ENCODE measurements at regions of chr17 and their contacts with region 1.

Region 1: DNA sequence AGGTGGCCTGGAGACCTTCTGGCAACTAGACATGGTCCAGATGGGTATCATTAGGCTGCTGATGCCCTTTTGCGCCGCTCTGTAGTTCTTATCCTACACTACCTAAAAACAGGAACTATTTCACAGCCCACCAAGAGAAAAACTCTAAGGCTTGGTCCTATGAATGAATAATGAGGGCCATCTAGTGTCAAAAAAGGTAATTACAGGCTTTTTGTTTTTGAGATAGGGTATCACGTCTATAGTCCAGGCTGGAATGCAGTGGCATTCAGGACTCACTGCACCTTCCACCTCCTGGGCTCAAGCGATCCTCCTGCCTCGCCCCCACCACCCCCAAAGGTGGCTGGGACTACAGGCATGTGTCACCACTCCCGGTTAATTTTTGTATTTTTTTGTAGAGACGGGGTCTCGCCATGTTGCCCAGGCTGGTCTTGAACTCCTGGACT is 20.9 kb downstream of the COIL start:
- DNase-seq: no peak
- ATAC-seq: peak; percentile 50 to 90 (median 86)
- H3K4me3 ChIP-seq: no peak overlapping the region
- H3K27ac ChIP-seq: no peak overlapping the region
- H3K4me1 ChIP-seq: no peaks in the 10 kb centered on the region
- H3K27me3 ChIP-seq: no peaks in the 10 kb centered on the region
- CTCF ChIP-seq: peak; percentile 44 to 51 (median 48)

Region 2: GRCh38 chr17:56810343-56810742 is 129.6 kb before region 1 on chr17:
- intact Hi-C with region 1: loop called in 2 of 3 experiments (anchors 5 to 10 kb)
- DNase-seq: no peak
- ATAC-seq: no peak
- H3K4me3 ChIP-seq: no peak overlapping the region
- H3K27ac ChIP-seq: no peak overlapping the region
- H3K4me1 ChIP-seq: no peaks in the 10 kb centered on the region
- H3K27me3 ChIP-seq: no peaks in the 10 kb centered on the region
- CTCF ChIP-seq: no peak

Region 3: DNA sequence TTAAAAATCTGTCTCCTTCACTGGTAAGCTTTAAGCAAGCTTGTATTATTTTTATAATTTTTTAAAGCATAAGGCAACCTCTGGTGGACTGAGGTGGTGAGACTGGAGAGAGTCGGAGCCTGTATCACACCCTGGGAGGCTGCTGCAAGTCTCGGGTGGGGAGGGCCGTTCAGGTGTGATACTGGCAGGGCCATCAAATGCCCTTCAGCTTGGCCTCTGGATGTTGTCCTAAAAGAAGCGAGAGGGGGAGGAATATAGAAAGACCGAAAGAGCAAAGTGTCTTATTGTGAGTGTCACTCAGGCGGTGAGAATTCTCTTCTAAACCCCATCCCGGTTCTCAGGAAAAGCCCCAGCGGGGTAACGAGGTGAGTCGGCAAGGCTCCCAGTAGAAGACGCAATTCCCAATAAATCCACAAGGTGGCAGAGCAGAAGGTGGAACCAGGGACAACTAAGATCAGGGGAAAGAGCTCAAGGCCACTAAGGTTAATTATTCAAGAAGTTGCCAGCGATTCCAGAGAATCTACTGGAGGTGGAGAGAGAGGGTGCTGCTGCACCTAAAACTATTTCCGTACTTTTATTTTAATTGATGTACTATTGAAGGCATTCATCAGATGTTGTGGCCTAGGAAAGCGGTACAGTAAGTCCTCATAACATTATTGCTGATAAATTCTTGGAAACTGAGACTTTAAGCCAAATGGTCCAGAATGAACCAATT is 120.3 kb before region 1 on chr17:
- intact Hi-C with region 1: loop called in 2 of 3 experiments (anchors 5 to 10 kb)
- DNase-seq: peak in 4 of 6 donors; percentile 62 to 91 (median 80)
- ATAC-seq: peak; percentile 88 to 95 (median 94)
- H3K4me3 ChIP-seq: peak overlapping the region in 1 of 4 donors; percentile 3
- H3K27ac ChIP-seq: peak overlapping the region in 2 of 4 donors; percentile 37 to 60
- H3K4me1 ChIP-seq: peaks cover 3 to 30% (median 21%) of the 10 kb centered on the region in 3 donors
- H3K27me3 ChIP-seq: no peaks in the 10 kb centered on the region
- CTCF ChIP-seq: peak; percentile 84 to 91 (median 90)

Region 4: DNA sequence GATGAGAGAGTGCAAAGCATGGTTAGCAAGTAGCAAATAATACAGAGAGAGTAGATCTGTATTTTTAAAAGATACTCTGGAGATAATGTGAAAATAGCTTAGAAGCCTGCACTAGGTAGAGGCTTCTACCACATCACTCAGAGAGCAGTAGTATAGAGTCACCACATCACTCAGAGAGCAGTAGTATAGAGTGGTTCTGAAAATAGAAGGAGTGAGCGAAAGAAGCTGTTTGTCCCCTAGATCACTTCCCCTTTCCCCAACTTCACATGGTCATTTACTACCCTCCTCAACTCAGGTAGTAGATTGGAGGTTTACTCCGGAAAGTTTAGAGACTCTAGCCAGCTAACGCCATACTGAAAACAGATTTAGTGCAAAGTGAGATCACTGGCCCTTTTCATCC is 88.9 kb before region 1 on chr17:
- intact Hi-C with region 1: no loop called
- DNase-seq: no peak
- ATAC-seq: no peak
- H3K4me3 ChIP-seq: no peak overlapping the region
- H3K27ac ChIP-seq: no peak overlapping the region
- H3K4me1 ChIP-seq: no peaks in the 10 kb centered on the region
- H3K27me3 ChIP-seq: no peaks in the 10 kb centered on the region
- CTCF ChIP-seq: no peak

Measured in pancreas (tissue), 10 donors.